ENCODE measurements at regions of chr16 and their contacts with region 1.

Region 1: GRCh38 chr16:70576431-70577255 is 53.0 kb downstream of the SF3B3 start:
- DNase-seq: peak; percentile 22
- ATAC-seq: peak; percentile 43
- H3K4me3 ChIP-seq: no peak overlapping the region
- H3K27ac ChIP-seq: no peak overlapping the region
- H3K4me1 ChIP-seq: peaks cover 6% of the 10 kb centered on the region; the same call in 1 of the 2 replicates
- H3K27me3 ChIP-seq: no peaks in the 10 kb centered on the region
- CTCF ChIP-seq: no peak

Region 2: GRCh38 chr16:70364399-70364798 is 212.2 kb before region 1 on chr16:
- CTCF ChIA-PET with region 1: no interaction called
- POLR2A ChIA-PET with region 1: interaction called, 15 read pairs
- intact Hi-C with region 1: no loop called
- DNase-seq: no peak
- ATAC-seq: no peak
- H3K4me3 ChIP-seq: no peak overlapping the region
- H3K27ac ChIP-seq: no peak overlapping the region
- H3K4me1 ChIP-seq: no peaks in the 10 kb centered on the region
- H3K27me3 ChIP-seq: no peaks in the 10 kb centered on the region
- CTCF ChIP-seq: no peak

Region 3: GRCh38 chr16:70661918-70662641 is 85.4 kb after region 1 on chr16:
- CTCF ChIA-PET with region 1: no interaction called
- POLR2A ChIA-PET with region 1: no interaction called
- intact Hi-C with region 1: no loop called
- DNase-seq: no peak
- ATAC-seq: peak; percentile 37; the same call in 1 of the 2 replicates
- H3K4me3 ChIP-seq: no peak overlapping the region
- H3K27ac ChIP-seq: no peak overlapping the region
- H3K4me1 ChIP-seq: no peaks in the 10 kb centered on the region
- H3K27me3 ChIP-seq: no peaks in the 10 kb centered on the region
- CTCF ChIP-seq: no peak